Right ventricle myocardium inferior (tissue), 1 donor: ENCODE measurements at regions of chr17 and their contacts with region 1.

Region 1: DNA sequence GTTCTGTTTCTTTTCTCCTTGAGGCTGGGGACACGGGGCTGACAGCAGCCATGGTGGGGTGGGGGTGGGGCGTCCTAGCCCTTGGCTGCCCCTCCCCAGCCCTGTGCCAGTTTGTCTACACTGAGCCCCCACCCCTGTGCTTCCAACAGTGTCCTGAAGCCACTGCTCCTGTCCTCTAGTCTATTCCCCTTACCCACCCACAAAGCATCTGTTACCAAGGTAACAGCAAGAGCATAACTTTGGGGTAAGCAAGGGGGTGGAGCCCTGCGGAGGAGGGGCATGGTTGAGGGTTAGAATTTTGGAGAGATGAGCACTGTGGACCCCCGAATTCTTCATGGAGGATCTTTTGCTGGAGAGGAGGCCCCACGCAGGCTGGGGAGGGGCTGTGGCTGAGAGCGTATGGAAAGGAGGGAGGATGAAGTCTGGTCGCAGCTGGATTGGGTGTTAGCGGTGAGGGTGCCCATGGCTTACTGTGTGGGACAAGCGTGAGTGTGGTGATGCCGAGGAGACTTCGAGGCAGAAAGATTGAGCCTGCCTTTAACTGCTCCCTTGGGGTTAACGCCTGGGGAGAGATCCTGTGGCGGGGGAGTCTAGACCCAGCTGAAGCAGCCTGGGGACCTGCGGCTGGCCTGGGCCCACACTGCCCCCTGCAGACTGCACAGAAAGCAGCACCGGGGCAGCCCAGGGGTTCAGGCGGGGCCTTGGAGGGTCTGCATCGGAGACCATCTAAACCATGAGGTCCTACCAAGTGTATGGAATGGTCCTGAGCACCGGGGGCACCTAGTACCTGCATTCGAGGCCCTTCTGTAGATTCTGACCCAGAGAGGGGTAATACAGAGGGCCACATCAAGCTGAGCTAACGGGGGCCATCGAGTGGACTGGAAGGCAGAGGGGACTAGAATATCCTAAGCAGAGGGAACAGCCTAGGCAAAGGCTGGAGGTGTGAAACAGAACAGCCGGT is 6.1 kb upstream of the STAC2 start:
- DNase-seq: peak; percentile 69
- ATAC-seq: peak; percentile 81

Region 2: DNA sequence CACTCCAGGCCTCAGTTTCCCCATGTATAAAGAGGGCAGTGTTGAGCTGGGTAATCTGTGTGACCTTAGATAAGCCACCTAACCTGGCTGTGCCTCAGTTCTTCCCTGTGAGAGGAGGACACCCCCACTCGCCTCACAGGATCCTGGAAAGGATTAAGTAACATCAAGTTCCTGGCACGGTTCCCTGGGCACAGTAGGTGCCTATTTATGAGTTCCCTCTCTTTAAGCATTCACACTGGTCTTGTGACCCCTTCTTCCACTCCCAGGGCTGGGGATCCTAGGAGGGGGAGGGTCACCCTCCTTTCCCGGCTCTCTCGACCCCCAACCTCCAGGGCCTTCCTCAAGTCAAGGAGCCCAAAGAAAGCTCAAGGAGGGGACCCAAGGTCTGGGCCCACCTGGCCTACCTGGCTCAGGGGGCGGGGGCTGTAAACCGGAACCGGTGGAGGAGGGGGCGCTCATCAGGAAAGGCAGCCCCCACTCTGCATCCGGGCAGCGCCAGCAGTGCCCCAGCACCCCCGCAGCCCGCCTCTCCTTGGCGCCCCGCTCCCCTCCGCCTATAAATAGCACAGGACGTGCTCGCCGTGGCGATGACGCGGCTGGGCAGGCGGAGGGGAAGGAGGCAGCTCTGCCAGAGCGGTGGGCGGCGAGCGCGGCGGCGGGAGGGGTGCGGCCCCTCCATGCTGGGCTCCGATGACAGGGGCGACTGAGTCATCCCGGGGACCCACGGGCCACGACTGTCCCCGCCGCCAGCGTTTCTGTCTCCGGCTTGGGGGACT is 22.4 kb before region 1 on chr17:
- intact Hi-C with region 1: loop called (anchors 2 kb)
- DNase-seq: peak; percentile 88
- ATAC-seq: peak; percentile 74

Region 3: DNA sequence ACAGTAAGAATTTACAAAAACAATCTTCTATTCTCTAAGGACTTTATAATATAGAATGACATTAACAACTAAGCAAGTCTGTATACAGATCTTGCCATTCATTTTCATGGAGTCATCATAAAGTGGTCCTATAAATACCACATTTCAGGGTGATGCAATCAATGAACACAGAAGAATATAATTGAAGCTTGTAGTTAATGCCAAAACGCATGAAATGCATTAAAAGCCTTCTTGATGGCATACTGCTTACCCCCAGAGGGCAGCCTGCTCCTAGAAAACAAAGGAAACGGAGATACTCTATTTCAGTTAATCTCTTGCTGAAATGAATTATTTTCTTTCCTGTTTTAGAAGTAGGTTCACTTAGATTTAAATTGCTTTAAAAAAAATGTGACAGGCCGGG is 39.1 kb after region 1 on chr17:
- intact Hi-C with region 1: no loop called
- DNase-seq: no peak
- ATAC-seq: no peak

Region 4: GRCh38 chr17:39294060-39294459 is 62.2 kb after region 1 on chr17:
- intact Hi-C with region 1: no loop called
- DNase-seq: no peak
- ATAC-seq: no peak